Calu3 (cell line): ENCODE measurements at regions of chr14 and their contacts with region 1.

Region 1: DNA sequence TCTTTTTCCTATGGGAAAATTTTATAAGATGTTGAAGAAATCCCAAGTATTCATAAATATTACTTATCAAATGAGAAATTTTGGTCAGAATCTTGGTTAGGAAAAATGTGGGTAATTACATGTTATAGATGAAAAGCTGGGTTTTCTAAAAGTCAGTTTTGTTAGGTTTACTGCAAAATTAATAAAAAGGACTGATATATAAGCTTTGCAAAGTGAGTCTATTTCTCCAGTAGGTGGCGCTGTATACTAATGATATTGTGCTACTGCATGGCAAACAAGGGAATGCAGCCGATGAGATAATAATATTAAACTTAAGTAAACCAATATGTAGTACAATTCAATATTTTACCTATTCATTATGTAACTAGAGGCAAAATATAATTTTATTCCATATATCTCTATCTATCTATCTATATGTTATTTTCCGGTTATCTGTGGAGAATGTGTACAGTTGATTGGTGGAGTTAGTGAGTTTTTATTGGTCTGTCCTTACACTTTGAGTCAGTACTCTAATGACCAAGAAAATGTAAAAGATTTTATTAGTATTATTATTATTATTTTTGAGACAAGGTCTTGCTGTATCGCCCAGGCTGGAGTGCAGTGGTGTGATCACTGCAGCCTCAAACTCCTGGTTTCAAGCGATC is 32.9 kb downstream of the MIPOL1 start:
- DNase-seq: peak; percentile 17
- H3K4me3 Mint-ChIP-seq: no peak overlapping the region
- H3K27ac Mint-ChIP-seq: no peak overlapping the region
- H3K4me1 Mint-ChIP-seq: peaks cover 14% of the 10 kb centered on the region
- H3K27me3 Mint-ChIP-seq: no peaks in the 10 kb centered on the region
- CTCF ChIP-seq: peak; percentile 60

Region 2: DNA sequence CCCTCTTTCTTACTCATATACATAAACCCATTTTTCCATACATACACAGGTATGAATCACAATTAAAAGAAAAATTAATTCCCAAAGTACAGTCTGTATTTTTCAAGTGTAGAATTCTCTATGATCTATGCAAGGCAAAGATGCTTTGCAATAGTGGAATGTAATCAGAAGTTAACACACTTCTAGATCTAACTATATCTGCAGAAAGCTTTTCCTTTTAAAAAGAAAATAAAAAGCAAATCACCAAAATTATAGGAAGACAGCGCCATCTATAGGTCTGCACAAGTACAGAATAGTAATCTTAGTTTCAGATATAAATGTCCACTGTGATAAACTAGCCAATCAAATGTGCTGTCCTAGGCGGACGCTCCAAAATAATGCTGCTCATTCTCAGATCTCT is 80.3 kb before region 1 on chr14:
- CTCF ChIA-PET with region 1: no interaction called
- intact Hi-C with region 1: loop called (anchors 2 kb)
- DNase-seq: peak; percentile 15
- H3K4me3 Mint-ChIP-seq: no peak overlapping the region
- H3K27ac Mint-ChIP-seq: no peak overlapping the region
- H3K4me1 Mint-ChIP-seq: peaks cover 11% of the 10 kb centered on the region
- H3K27me3 Mint-ChIP-seq: no peaks in the 10 kb centered on the region
- CTCF ChIP-seq: peak; percentile 52

Region 3: DNA sequence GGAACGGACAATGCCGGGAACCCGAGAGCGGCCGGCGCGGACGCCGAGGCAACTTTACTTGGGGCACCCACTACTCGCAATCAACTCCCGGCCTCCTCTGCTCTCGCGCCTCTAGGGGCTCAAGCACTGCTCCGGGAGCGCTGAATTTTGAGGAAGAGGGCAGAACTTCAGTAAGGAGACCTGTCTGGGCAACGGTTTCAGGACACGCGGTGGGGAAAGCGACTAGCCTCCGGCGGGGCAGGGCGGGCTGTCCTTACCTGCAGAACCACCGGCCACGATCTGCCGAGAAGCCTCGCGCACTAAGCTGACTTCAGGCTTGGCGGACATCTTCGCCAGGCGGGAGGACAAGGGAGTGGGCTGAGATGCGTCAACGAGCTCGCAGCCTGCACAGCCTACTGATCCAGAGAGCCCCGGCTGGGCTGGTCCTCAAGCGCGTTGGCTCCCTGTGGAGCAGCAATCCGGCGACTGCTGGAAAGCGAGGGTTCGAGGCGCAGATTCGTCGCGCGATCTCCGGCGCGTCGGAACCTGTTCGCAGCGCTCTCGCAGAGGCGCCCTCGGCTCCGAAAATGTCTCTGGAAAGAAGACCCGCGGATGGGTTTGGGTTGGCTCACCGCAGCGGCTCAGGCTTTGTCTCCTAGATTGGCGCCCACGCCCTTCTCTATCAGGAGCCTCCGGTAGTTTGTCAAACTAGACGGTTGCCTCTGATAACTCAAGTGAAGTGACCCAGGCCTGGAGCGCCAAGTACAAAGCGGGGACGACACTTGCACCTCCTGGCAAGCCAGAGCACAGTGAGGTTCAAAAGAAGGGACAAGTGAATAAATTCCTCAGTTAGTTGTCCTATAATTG is 58.4 kb before region 1 on chr14 and contains the start of gene SLC25A21:
- CTCF ChIA-PET with region 1: no interaction called
- intact Hi-C with region 1: loop called (anchors 5 kb)
- DNase-seq: peak; percentile 84
- H3K4me3 Mint-ChIP-seq: peak within 1 kb of the TSS; percentile 85
- H3K27ac Mint-ChIP-seq: peak within 1 kb of the TSS; percentile 90
- H3K4me1 Mint-ChIP-seq: no peaks in the 10 kb centered on the region
- H3K27me3 Mint-ChIP-seq: no peaks in the 10 kb centered on the region
- CTCF ChIP-seq: no peak
- total RNA-seq, gene SLC25A21: 1.2 and 1.4 TPM in 2 replicates

Region 4: DNA sequence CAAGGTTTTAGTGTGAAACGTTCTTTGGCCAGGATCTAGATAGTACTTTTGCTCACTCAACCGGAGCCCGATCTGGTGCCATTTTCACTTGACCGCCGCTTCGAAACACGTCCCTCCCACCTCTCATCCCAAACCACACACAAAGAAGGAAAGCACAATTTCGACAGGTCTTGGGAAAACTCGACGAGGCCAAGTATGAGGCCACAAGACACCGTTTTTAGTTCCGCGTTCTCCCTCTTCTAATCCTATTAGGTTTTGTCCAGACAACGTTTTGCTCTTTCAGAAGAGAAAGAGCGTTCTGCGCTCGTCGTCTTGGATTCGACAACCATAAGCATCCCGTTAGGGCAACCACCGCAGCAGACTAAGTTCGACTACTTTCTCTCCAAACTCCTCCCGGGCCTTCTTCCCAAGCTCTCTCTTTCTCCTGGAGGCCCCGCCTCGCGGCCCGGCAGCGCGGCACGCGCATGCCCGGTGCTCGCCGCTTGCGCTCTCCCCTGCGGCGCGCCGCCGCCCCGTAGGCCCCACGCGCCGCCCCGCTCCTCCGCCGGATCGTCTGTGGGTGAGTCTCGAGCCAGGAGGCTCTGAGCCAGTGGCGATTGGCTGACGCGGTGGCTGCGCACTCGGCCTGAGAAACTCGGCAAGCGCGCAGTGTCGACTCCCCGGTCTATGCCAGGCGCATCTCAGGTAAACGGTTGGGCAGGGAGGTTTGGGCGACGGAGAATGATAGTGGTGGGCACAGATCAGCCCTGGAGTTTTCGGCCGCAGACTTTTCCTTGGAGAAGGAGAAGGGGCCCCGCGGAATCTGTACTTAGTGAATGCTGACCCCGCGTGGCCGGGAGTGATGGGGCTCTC is 33.0 kb before region 1 on chr14 and contains the start of gene MIPOL1:
- CTCF ChIA-PET with region 1: interaction called, 7 read pairs
- intact Hi-C with region 1: loop called (anchors 5 kb)
- DNase-seq: peak; percentile 85
- H3K4me3 Mint-ChIP-seq: peak within 1 kb of the TSS; percentile 94
- H3K27ac Mint-ChIP-seq: peak within 1 kb of the TSS; percentile 97
- H3K4me1 Mint-ChIP-seq: peaks cover 44% of the 10 kb centered on the region
- H3K27me3 Mint-ChIP-seq: no peaks in the 10 kb centered on the region
- CTCF ChIP-seq: no peak
- total RNA-seq, gene MIPOL1: 22.0 and 27.2 TPM in 2 replicates